Activated naive CD4-positive, alpha-beta T cell treated with anti-CD3 and anti-CD28 coated beads for 36 hours (primary cell): ENCODE measurements at regions of chr7 and their contacts with region 1.

Region 1: DNA sequence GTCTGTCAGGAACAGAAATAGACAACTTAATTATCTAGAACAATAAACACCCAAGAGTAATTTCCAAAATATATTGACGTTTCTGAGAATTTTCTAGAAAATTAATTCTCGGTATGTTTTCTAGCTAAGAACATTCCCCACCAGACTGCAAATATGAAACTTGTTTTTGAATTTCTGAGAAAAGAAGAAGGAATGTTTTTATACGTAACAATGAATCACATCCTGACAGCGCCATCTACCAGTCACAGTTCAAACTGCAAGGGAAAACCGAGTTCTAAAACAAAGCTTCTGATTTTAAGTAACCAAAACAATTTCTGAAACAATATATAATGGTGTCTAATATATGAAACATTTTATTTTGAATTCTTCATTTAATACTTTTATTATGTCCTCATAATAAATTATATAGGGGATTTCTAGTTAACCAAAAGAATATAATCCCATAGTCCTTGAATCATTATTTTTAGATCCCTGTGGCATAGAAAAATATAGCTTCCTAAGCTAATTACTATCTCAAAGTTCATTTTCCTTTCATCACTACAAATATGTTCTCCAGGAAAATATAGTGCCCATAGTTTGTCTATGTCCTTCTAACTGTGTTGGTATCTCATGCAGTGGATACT is 34.5 kb upstream of the MEOX2 start:
- DNase-seq: peak; percentile 21
- H3K4me3 Mint-ChIP-seq: no peak overlapping the region
- H3K27ac Mint-ChIP-seq: no peak overlapping the region
- H3K4me1 Mint-ChIP-seq: no peaks in the 10 kb centered on the region
- H3K27me3 Mint-ChIP-seq: no peaks in the 10 kb centered on the region

Region 2: DNA sequence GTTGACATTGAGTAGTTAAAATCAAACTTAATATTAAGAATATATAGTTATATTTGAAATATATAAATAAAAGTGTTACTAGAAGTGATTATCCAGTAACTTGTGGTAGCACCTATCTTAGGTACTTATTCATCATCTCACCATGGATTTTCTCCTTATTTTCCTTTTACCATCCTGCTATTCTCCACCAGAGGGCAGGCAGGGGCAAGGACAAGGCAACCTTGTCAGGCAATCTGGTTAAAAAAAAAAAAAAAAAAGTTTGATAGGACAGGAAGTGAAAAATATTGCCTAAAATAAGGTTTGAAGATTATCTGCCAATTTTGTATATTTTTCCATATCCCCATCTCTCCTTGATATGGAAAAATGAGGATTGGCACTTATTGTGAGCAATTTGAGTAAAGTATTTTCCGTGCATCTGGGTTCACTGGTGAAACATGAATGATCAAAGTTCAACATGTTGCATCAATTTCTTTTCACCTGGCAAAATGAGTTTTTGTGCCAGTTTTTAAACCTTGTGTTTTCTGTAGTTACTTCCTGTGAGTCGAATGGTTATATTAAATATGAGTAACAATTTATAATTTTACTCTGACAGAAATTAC is 415.9 kb before region 1 on chr7:
- CTCF ChIA-PET with region 1: no interaction called
- intact Hi-C with region 1: loop called (anchors 2 kb)
- DNase-seq: peak; percentile 13
- H3K4me3 Mint-ChIP-seq: no peak overlapping the region
- H3K27ac Mint-ChIP-seq: no peak overlapping the region
- H3K4me1 Mint-ChIP-seq: no peaks in the 10 kb centered on the region
- H3K27me3 Mint-ChIP-seq: no peaks in the 10 kb centered on the region

Region 3: GRCh38 chr7:15326044-15326644 is 394.8 kb before region 1 on chr7:
- CTCF ChIA-PET with region 1: interaction called, 6 read pairs
- intact Hi-C with region 1: loop called (anchors 1 kb)
- DNase-seq: no peak
- H3K4me3 Mint-ChIP-seq: no peak overlapping the region
- H3K27ac Mint-ChIP-seq: no peak overlapping the region
- H3K4me1 Mint-ChIP-seq: no peaks in the 10 kb centered on the region
- H3K27me3 Mint-ChIP-seq: no peaks in the 10 kb centered on the region

Region 4: DNA sequence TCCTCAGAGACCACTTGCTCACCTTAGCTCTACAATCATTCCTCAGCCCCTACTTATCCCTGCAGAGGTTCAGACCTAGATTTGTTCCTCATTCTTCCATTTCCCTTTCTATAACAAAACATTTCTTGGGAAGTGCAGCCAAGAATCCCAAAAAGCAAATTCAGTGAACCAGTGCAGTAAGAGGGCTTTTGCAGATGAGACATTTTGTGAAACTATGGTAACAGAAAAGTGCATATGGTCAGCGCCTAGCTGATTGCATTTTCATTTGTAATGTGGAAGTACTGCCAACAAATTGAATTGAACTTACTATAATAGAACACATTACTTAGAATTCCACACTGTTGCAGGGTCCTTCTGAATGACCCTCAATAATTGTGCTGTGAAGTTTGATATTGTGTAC is 177.7 kb before region 1 on chr7:
- CTCF ChIA-PET with region 1: no interaction called
- intact Hi-C with region 1: no loop called
- DNase-seq: no peak
- H3K4me3 Mint-ChIP-seq: no peak overlapping the region
- H3K27ac Mint-ChIP-seq: no peak overlapping the region
- H3K4me1 Mint-ChIP-seq: no peaks in the 10 kb centered on the region
- H3K27me3 Mint-ChIP-seq: no peaks in the 10 kb centered on the region

Region 5: DNA sequence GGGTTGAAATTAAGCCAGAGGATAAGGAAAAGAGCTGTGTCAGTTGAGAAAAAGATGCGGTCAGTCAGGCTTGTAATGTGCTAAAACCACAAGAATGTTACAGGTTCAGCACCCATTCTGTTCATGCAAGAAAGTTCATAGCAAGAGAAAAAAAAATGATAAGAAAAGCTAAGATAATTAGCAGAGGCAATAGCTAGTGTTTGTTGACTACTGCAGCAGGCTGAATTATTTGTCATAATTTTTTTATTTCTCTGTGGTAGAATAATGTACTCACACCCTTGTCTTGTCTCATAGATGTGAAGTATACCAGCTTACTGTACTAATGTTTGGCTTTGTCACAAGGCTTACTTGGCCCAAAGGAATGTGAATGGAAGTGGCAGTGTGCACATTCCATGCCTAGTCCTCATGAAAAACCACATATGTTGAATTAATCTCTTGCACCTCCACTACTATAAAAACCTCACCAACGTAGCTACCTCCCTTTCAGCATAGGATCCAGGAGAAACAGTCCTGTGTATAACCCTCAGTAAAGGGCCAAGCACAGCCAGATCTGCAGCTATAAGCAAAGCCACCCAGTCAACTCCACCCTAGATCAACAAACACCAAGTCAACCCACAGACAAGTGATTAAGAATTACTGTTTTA is 625.5 kb after region 1 on chr7:
- CTCF ChIA-PET with region 1: no interaction called
- intact Hi-C with region 1: no loop called
- DNase-seq: no peak
- H3K4me3 Mint-ChIP-seq: no peak overlapping the region
- H3K27ac Mint-ChIP-seq: no peak overlapping the region
- H3K4me1 Mint-ChIP-seq: no peaks in the 10 kb centered on the region
- H3K27me3 Mint-ChIP-seq: no peaks in the 10 kb centered on the region